ENCODE measurements at regions of chr17 and their contacts with region 1.

Region 1: DNA sequence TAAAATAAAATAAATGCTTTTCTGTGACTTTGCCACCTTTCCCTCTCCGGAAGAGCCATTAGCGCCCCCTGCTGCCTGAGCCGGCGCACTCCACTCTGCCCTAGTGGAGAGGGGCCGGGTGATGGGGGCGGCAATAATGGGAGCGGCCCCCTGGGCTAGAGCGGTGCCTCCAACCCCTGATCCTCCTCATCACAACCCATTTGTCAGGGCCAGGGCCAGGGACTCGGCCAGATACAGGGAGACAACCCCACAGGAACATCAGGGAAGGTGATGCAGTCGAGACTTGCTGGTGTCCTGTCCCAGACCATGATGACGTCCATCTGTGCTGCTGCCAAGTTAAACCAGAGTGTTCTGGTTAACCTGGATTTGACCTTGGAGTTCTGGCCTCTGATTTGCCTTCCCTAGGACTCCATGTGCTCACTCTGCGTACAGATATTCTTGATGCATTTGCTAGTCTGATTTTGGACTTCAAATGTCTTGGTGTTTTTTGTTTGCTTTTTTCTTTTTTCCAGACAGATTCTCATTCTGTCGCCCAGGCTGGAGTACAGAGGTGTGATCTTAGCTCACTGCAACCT is 46.1 kb upstream of the BPTF start:
- DNase-seq: peak in 1 of 2 experiments; percentile 37
- H3K4me3 ChIP-seq: no peak overlapping the region
- H3K27ac ChIP-seq: no peak overlapping the region
- H3K4me1 ChIP-seq: peaks cover 4% of the 10 kb centered on the region; the same call in 1 of the 2 replicates
- H3K27me3 ChIP-seq: no peaks in the 10 kb centered on the region
- CTCF ChIP-seq: peak; percentile 77

Region 2: DNA sequence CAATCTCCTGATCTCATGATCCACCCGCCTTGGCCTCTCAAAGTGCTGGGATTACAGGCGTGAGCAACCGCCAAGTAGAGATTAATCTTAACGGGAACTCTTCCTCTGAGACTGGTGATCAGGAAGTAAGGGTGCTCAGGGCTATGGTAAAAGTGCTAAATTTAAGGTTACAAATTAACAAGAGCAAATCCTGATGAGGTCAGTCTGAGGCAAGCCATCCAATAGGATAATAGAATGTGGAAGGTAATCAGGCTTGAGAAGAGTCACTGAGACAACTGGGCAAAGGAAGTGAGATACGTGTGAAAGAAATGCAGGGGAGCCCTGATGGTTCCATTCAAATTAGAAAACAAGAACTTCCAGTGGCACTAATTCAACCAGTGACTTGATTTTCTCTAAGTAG is 665.7 kb before region 1 on chr17:
- CTCF ChIA-PET with region 1: interaction called, 14 read pairs
- POLR2A ChIA-PET with region 1: no interaction called
- intact Hi-C with region 1: no loop called
- DNase-seq: no peak
- H3K4me3 ChIP-seq: no peak overlapping the region
- H3K27ac ChIP-seq: no peak overlapping the region
- H3K4me1 ChIP-seq: no peaks in the 10 kb centered on the region
- H3K27me3 ChIP-seq: no peaks in the 10 kb centered on the region
- CTCF ChIP-seq: no peak

Region 3: GRCh38 chr17:67272312-67273050 is 506.7 kb before region 1 on chr17:
- CTCF ChIA-PET with region 1: no interaction called
- POLR2A ChIA-PET with region 1: interaction called, 14 read pairs
- intact Hi-C with region 1: no loop called
- DNase-seq: no peak
- H3K4me3 ChIP-seq: no peak overlapping the region
- H3K27ac ChIP-seq: no peak overlapping the region
- H3K4me1 ChIP-seq: no peaks in the 10 kb centered on the region
- H3K27me3 ChIP-seq: no peaks in the 10 kb centered on the region
- CTCF ChIP-seq: peak; percentile 44; the same call in 1 of the 2 replicates

Region 4: DNA sequence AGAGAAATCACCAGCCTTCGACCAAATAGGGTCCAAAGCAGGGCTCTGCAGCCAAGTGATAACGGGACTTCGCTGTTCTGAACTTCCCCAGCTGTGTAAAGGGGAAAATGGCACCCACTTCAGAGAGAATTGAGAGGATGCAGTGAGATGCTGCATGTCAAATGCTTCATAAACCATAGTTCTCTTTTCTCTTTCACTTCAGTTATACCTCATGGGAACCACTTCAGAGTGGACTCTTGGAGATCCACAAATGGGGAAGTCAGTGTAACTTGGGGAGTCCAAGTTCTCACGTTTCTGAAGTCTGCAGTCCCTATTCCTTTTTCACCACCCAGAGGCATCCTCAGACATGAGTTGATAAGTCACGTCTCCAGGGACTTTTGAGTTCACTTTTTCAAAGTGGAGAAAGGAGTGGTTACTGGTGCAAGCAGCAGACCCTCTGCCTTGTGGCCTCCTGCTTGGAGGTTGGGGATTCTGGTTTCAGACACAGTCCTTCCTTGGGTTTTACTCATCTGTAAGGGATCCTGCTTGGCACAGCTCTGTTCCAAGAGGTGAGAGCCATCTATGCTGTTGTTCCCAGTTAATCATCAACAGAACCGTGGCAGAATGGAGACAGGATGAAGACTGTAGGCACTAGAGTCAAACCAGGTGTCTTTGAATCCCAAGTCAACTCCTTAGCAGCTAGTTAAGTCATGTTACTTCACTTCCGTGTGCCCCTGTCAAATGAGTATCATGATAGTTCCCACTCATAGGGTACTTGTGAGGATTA is 184.9 kb before region 1 on chr17:
- CTCF ChIA-PET with region 1: no interaction called
- POLR2A ChIA-PET with region 1: interaction called, 28 read pairs
- intact Hi-C with region 1: no loop called
- DNase-seq: no peak
- H3K4me3 ChIP-seq: no peak overlapping the region
- H3K27ac ChIP-seq: no peak overlapping the region
- H3K4me1 ChIP-seq: no peaks in the 10 kb centered on the region
- H3K27me3 ChIP-seq: no peaks in the 10 kb centered on the region
- CTCF ChIP-seq: no peak

Region 5: GRCh38 chr17:67836205-67836987 is 57.2 kb after region 1 on chr17:
- CTCF ChIA-PET with region 1: no interaction called
- POLR2A ChIA-PET with region 1: interaction called, 22 read pairs
- intact Hi-C with region 1: no loop called
- DNase-seq: no peak
- H3K4me3 ChIP-seq: no peak overlapping the region
- H3K27ac ChIP-seq: no peak overlapping the region
- H3K4me1 ChIP-seq: no peaks in the 10 kb centered on the region
- H3K27me3 ChIP-seq: no peaks in the 10 kb centered on the region
- CTCF ChIP-seq: no peak